Colonic mucosa (tissue), 4 donors: ENCODE measurements at regions of chr11 and their contacts with region 1.

Region 1: DNA sequence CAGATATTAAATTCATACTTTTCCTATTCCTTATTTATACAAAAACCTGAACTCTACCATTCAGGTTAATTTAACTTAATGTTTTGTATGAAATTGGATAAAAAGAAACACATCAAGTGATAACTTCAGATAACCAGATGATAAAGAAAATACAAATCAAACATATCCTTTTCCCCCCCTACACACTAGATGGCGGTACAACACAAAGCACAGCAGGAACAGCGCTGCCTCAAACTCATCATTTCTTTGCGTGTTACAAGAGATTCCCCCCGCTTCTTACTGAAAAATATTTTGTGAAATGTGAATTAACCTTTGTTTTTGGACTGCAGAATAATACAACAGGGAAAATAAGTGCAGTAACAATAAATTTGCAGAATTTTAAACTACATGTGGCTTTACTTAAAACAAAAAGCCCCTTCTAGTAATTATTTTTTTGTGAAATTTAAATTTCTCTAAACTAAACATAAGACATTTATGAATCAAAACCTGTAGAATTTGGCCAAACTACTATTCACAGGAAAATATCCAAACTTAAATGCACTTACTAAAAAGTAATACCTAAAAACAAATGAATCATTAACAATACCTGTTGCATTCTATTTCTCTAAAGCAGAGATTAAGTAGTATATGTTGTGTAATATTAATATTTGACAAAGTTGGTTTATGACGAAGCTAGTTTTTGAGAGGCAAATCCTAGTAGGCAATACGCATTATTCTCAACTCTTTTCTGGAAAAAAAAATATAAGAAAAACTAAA is 74.4 kb downstream of the ARHGAP32 start:
- DNase-seq: peak; percentile 71
- H3K4me3 ChIP-seq: no peak overlapping the region
- H3K27ac ChIP-seq: no peak overlapping the region
- H3K4me1 ChIP-seq: no peaks in the 10 kb centered on the region
- H3K27me3 ChIP-seq: no peaks in the 10 kb centered on the region
- CTCF ChIP-seq: peak; percentile 83

Region 2: GRCh38 chr11:128658502-128658901 is 459.3 kb before region 1 on chr11:
- intact Hi-C with region 1: no loop called
- DNase-seq: no peak
- H3K4me3 ChIP-seq: no peak overlapping the region
- H3K27ac ChIP-seq: no peak overlapping the region
- H3K4me1 ChIP-seq: no peaks in the 10 kb centered on the region
- H3K27me3 ChIP-seq: no peaks in the 10 kb centered on the region
- CTCF ChIP-seq: no peak

Region 3: GRCh38 chr11:128884703-128885338 is 233.0 kb before region 1 on chr11:
- intact Hi-C with region 1: loop called (anchors 10 kb)
- DNase-seq: peak; percentile 80
- H3K4me3 ChIP-seq: no peak overlapping the region
- H3K27ac ChIP-seq: no peak overlapping the region
- H3K4me1 ChIP-seq: no peaks in the 10 kb centered on the region
- H3K27me3 ChIP-seq: peaks cover 8% of the 10 kb centered on the region
- CTCF ChIP-seq: peak; percentile 68

Region 4: DNA sequence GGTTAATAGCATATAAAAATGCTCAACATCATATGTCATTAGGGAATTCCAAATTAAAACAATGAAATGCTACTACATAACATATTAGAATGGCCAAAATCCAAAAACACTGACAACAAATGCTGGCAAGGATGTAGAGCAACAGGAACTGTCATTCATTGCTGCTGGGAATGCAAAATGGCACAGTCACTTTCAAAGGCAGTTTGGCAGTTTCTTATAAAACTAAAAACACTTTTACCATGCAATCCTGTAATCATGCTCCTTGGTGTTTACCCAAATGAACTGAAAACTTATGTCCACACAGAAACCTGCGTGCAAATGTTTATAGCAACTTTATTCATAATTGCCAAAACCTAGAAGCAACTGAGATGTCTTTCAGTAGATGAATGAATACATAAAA is 30.8 kb before region 1 on chr11:
- intact Hi-C with region 1: no loop called
- DNase-seq: no peak
- H3K4me3 ChIP-seq: no peak overlapping the region
- H3K27ac ChIP-seq: no peak overlapping the region
- H3K4me1 ChIP-seq: no peaks in the 10 kb centered on the region
- H3K27me3 ChIP-seq: no peaks in the 10 kb centered on the region
- CTCF ChIP-seq: no peak

Region 5: DNA sequence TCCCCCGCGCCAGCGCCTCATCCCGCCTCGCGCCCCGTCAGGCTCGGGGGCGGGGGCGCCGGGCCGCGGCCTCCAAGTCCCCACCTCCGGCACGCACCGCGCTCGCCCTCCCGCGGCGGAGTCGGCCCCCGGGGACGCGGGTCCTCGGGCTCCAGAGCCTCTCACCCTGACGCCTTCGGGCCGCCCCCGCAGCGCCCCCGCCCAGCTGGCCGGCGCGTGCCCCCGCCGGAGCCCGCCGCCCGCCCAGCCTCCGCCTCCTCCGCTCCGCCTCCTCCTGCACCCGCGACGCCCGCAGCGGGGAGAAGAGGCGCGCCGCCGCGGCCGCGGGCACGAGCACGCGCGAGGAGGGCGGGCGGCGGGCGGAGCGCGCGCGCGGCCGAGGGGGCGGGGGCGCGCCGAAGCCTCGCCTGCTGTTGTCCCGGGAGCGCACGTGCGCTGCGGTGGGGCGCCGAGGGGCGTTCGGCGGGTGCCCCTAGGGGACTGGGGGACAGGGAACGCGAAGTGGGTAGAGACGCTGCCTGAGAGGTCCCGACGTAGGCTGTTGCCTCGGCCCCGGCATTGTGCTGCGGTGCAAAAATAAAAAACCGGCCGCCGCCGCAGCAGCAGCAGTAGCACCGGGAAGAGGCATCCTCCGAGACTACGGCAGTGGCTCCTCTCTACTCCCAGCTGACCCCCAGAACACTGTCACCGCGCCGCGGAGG is 161.7 kb after region 1 on chr11:
- intact Hi-C with region 1: loop called (anchors 5 kb)
- DNase-seq: peak; percentile 83
- H3K4me3 ChIP-seq: peak overlapping the region; percentile 48
- H3K27ac ChIP-seq: peak overlapping the region; percentile 9
- H3K4me1 ChIP-seq: peaks cover 9% of the 10 kb centered on the region
- H3K27me3 ChIP-seq: no peaks in the 10 kb centered on the region
- CTCF ChIP-seq: no peak

Region 6: GRCh38 chr11:129331871-129332274 is 214.1 kb after region 1 on chr11:
- intact Hi-C with region 1: loop called (anchors 5 kb)
- DNase-seq: peak; percentile 94
- H3K4me3 ChIP-seq: no peak overlapping the region
- H3K27ac ChIP-seq: no peak overlapping the region
- H3K4me1 ChIP-seq: no peaks in the 10 kb centered on the region
- H3K27me3 ChIP-seq: no peaks in the 10 kb centered on the region
- CTCF ChIP-seq: peak; percentile 81

Region 7: DNA sequence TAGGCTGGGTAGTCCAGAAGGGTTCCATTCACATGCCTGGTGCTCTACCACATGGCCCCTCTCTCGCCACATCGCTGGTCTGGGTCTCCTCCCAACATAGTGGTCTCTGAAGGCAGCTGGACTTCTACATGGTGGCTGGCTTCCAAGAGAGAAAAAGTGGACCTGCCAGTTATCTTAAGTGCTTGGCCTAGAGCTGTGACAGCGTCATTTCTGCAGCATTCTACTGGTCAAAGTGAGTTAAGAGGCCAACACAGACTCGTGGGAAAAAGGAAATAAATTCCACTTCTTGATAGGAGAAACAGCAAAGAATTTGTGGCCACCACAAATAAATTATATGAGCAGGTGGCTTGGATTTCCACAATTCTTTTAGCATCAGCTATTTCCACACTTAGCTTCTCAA is 236.9 kb after region 1 on chr11:
- intact Hi-C with region 1: no loop called
- DNase-seq: no peak
- H3K4me3 ChIP-seq: no peak overlapping the region
- H3K27ac ChIP-seq: no peak overlapping the region
- H3K4me1 ChIP-seq: no peaks in the 10 kb centered on the region
- H3K27me3 ChIP-seq: no peaks in the 10 kb centered on the region
- CTCF ChIP-seq: no peak

Region 8: GRCh38 chr11:129750349-129751292 is 632.8 kb after region 1 on chr11:
- intact Hi-C with region 1: loop called (anchors 5 kb)
- DNase-seq: peak; percentile 74
- H3K4me3 ChIP-seq: peak overlapping the region; percentile 23
- H3K27ac ChIP-seq: no peak overlapping the region
- H3K4me1 ChIP-seq: no peaks in the 10 kb centered on the region
- H3K27me3 ChIP-seq: peaks cover 2% of the 10 kb centered on the region
- CTCF ChIP-seq: peak; percentile 99